CD4-positive, alpha-beta T cell (primary cell): ENCODE measurements at regions of chr1 and their contacts with region 1.

Region 1: GRCh38 chr1:30779294-30780071 is 21.9 kb upstream of the LAPTM5 start:
- DNase-seq: peak; percentile 78 to 98 (median 92)
- ATAC-seq: peak; percentile 75
- H3K4me3 ChIP-seq: no peak overlapping the region
- H3K4me3 Mint-ChIP-seq: no peak overlapping the region
- H3K27ac ChIP-seq: no peak overlapping the region
- H3K27ac Mint-ChIP-seq: peak overlapping the region; percentile 3
- H3K4me1 ChIP-seq: peaks cover 25% of the 10 kb centered on the region
- H3K4me1 Mint-ChIP-seq: peaks cover 16% of the 10 kb centered on the region
- H3K27me3 ChIP-seq: no peaks in the 10 kb centered on the region
- H3K27me3 Mint-ChIP-seq: no peaks in the 10 kb centered on the region
- CTCF ChIP-seq: peak; percentile 92

Region 2: GRCh38 chr1:30732277-30732996 is 47.0 kb before region 1 on chr1:
- CTCF ChIA-PET with region 1: interaction called, 17 read pairs
- POLR2A ChIA-PET with region 1: interaction called, 3 read pairs
- intact Hi-C with region 1: no loop called
- DNase-seq: no peak
- ATAC-seq: peak; percentile 73
- H3K4me3 ChIP-seq: no peak overlapping the region
- H3K4me3 Mint-ChIP-seq: no peak overlapping the region
- H3K27ac ChIP-seq: no peak overlapping the region
- H3K27ac Mint-ChIP-seq: peak overlapping the region; percentile 96
- H3K4me1 ChIP-seq: peaks cover 26% of the 10 kb centered on the region
- H3K4me1 Mint-ChIP-seq: peaks cover 19% of the 10 kb centered on the region
- H3K27me3 ChIP-seq: no peaks in the 10 kb centered on the region
- H3K27me3 Mint-ChIP-seq: no peaks in the 10 kb centered on the region
- CTCF ChIP-seq: no peak

Region 3: DNA sequence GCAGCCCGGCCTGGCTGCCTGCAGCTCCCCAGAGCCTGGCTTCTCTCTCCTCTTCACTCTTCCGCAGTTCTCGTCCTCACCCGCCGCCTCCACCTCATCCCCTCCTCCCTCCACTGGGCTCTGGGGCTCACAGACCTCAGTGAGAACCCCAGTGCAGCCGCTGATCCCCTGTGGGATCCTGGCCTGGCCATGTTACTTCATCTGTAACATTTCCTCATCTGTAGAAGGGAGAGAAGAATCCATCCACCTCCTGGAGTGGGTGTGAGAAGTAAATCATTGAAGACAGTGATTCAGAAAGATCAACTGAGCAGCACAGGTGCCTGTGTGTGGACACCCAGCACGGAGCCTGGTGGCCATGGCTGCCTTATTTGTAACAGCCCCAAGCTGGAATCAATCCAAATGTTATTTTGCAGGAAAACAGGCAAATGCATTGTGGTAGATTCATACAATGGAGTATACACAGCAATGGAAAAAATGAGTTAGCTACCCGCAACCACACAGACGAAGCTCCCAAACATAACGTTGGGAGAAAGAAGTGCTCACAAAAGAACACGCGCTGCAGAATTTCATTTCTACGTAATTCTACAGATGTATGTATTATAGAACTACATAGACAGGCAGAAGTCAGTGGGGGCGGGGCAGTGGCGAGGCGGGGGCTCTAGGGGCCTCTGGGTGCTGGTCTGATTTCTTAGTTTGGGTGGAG is 30.6 kb before region 1 on chr1:
- CTCF ChIA-PET with region 1: interaction called, 29 read pairs
- POLR2A ChIA-PET with region 1: interaction called, 22 read pairs
- intact Hi-C with region 1: loop called in 1 of 2 experiments (anchors 2 kb)
- DNase-seq: peak in 4 of 14 experiments; percentile 27 to 56 (median 46)
- ATAC-seq: no peak
- H3K4me3 ChIP-seq: peak overlapping the region; percentile 34
- H3K4me3 Mint-ChIP-seq: peak overlapping the region; percentile 85
- H3K27ac ChIP-seq: peak overlapping the region; percentile 95 to 97
- H3K27ac Mint-ChIP-seq: peak overlapping the region; percentile 96
- H3K4me1 ChIP-seq: peaks cover 99% of the 10 kb centered on the region
- H3K4me1 Mint-ChIP-seq: peaks cover 100% of the 10 kb centered on the region
- H3K27me3 ChIP-seq: no peaks in the 10 kb centered on the region
- H3K27me3 Mint-ChIP-seq: no peaks in the 10 kb centered on the region
- CTCF ChIP-seq: no peak

Region 4: DNA sequence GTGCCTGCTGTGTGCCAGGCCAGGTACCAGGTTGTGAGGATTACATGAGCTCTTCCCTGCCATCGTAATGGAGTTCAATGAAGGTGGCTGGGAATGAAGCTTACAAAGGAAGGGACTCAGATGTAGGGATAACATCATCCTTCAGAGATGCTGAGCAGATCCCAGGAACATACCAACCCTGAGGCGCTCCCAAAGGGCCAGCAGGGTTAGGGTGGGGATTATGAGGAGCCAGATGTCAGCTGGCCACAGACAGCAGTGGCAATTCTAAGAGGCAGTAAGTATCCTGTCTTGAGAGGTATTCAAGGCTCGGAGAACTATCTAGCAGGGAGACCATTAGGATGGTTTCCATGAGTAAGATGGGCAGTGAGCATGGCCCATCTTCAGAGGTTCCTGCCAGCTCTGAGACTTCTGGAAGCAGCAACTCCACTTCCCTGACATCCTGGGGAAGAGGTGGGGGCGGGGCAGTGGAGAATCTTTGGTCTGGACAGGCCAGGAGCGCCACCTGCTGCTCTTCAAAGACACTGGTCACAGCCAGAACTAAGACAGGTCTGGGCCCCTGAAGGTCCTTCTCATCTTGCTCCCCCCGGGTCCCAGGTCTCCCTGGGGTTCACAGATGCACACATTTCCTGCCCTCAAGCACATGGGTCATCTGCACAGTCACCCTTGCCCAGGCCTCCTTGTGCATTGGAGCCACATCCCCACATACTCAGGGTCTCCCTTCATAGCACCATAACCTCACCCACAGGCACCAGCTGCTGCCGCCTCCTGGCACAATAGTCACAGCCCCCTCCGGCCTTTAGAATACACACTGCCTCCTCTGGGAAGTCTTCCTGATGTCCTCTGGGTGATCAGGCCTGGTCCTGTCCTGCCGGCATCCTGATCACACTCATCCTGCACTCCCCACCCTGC is 131.8 kb after region 1 on chr1:
- CTCF ChIA-PET with region 1: interaction called, 4 read pairs
- POLR2A ChIA-PET with region 1: no interaction called
- intact Hi-C with region 1: loop called in 1 of 2 experiments (anchors 5 kb)
- DNase-seq: peak in 12 of 14 experiments; percentile 11 to 71 (median 38)
- ATAC-seq: no peak
- H3K4me3 ChIP-seq: no peak overlapping the region
- H3K4me3 Mint-ChIP-seq: peak overlapping the region; percentile 72
- H3K27ac ChIP-seq: no peak overlapping the region
- H3K27ac Mint-ChIP-seq: no peak overlapping the region
- H3K4me1 ChIP-seq: peaks cover 32% of the 10 kb centered on the region
- H3K4me1 Mint-ChIP-seq: peaks cover 16% of the 10 kb centered on the region
- H3K27me3 ChIP-seq: peaks cover 22 to 32% of the 10 kb centered on the region in 2 experiments
- H3K27me3 Mint-ChIP-seq: peaks cover 27% of the 10 kb centered on the region
- CTCF ChIP-seq: peak; percentile 60

Region 5: DNA sequence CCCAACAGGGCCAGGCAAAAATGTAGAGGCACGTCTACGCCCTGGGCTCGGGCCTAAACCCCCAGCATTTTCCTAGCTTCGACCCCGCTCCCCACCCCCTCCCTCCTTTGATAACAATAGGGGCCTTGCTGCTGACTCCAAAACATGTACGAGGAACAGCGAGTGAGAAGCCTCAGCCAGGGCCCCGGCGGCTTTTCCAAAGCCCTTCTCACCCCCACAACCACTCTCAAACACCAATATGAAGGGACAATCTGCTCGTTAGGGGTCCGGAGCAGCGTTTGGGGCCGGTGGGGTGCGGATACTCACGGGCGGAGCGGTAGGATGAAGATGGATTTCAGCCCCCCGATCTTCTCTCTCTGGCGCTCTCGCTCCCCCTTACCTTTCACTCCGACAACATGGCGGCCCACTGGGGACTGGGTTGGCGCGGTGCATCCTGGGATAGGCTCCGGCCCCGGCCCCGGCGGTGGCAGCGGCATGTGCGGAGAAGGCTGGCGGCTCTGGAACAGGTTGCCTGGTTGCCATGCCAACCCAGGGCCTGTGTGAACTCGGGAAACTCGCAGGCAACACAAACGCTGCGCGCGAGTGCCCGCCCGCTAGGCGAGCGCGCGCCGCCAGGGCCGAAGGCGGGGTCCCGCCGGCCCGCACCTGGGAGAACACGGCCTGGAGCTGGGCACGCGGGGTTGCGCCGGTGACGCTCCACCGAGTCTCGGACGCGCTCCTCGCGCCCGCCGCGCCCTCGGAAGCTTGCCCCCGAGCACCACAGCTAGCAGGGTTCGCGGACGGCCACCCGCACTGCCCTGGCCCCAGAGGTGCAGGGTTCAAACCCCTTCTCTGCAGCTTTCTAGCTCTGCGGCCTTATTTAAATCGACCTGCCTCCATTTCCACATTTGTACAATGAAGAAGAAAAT is 286.1 kb after region 1 on chr1 and contains the start of gene PUM1:
- CTCF ChIA-PET with region 1: no interaction called
- POLR2A ChIA-PET with region 1: no interaction called
- intact Hi-C with region 1: no loop called
- DNase-seq: peak; percentile 96 to 99 (median 98)
- ATAC-seq: peak; percentile 96
- H3K4me3 ChIP-seq: peak within 1 kb of the TSS; percentile 71
- H3K4me3 Mint-ChIP-seq: peak within 1 kb of the TSS; percentile 93
- H3K27ac ChIP-seq: peak within 1 kb of the TSS; percentile 89 to 92
- H3K27ac Mint-ChIP-seq: peak within 1 kb of the TSS; percentile 95
- H3K4me1 ChIP-seq: peaks cover 29% of the 10 kb centered on the region
- H3K4me1 Mint-ChIP-seq: peaks cover 34% of the 10 kb centered on the region
- H3K27me3 ChIP-seq: no peaks in the 10 kb centered on the region
- H3K27me3 Mint-ChIP-seq: no peaks in the 10 kb centered on the region
- CTCF ChIP-seq: no peak
- total RNA-seq, gene PUM1: 190 to 202 TPM